ENCODE measurements at regions of chr7 and their contacts with region 1.

Region 1: DNA sequence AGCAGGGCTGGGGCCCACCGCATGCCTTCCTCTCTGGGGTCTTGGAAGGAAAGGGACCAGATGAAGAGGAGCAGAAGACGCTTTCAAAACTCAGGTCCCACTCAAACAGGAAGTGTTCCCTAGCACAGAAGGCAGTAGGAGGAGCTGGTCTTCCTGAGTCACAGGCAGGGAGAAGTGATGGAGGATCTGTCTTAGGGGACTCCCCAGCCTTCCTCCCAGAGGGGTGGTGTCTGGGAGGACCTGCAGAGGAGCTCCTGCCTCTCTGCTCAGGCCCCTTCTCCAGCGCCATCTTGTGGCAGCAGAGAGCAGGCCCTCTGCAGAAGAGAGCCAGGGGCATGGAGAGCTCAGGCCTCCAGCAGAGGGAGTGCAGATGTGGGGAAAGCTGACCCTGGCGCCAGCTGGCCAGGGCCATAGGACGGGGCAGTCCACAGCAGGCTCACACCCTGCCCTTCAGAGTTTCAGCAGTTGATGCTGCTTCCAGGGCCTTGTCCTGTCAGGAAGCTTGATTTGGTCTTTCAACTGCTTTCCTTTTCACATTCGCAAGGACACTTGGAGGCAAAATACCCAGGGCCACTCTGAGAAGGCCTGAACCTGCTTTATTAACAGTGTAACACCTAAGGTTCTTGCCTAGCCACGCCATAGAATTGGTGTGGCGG is 62.2 kb upstream of the TARP start:
- DNase-seq: peak; percentile 90
- H3K4me3 Mint-ChIP-seq: peak overlapping the region; percentile 43
- H3K27ac Mint-ChIP-seq: peak overlapping the region; percentile 77
- H3K4me1 Mint-ChIP-seq: peaks cover 39% of the 10 kb centered on the region
- H3K27me3 Mint-ChIP-seq: no peaks in the 10 kb centered on the region

Region 2: DNA sequence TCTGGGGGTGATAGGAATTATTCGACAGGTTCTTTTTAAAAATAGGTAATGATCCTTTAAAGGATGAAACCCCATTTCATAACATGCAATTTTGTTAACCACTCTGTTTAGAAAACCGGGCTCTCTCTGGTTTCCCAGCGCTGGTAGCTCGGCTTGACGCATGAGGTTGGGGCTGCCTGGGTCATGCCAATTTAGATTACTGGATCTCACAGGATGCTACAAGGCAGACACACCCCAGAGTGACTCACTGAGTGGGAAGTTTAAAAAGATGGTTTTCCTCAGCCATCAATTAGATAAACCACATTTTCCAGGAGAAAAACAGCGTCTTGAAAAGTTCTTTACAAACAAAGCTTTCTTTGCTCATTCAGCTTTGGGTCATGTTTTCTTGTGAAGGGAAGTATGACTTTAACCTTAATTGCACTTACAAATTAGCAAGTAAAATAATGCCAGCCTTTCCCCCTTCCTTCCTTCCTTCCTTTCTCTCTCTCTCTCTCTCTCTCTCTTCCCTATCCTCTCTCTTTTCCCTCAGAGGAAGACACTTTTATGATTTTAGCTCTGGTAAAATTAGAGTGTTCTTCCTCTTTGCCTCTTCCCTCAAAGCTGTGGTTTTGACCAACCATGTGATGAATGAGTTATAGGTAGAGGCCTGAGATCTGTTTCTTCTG is 315.4 kb before region 1 on chr7:
- CTCF ChIA-PET with region 1: no interaction called
- intact Hi-C with region 1: no loop called
- DNase-seq: no peak
- H3K4me3 Mint-ChIP-seq: no peak overlapping the region
- H3K27ac Mint-ChIP-seq: no peak overlapping the region
- H3K4me1 Mint-ChIP-seq: no peaks in the 10 kb centered on the region
- H3K27me3 Mint-ChIP-seq: peaks cover 16% of the 10 kb centered on the region

Region 3: DNA sequence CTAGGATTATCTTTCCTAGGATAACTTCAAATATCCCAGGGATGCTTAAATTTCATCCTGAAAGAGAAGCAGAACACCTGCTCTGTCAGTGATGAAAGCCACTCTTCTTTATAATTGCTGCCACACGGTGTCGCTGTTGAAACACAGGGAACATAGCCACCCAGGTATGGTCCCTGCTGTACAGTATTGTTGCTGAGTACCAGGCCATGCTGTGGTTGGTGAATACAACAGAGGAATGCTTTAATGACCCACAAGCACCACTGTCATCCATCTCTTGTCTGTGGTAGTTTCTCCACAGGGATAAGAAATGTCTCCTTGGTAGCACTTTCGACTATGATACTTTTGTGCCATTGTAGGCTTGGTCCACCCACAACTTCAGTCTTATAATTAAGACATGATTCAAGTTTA is 228.1 kb before region 1 on chr7:
- CTCF ChIA-PET with region 1: interaction called, 20 read pairs
- intact Hi-C with region 1: loop called (anchors 1 kb)
- DNase-seq: peak; percentile 84
- H3K4me3 Mint-ChIP-seq: no peak overlapping the region
- H3K27ac Mint-ChIP-seq: no peak overlapping the region
- H3K4me1 Mint-ChIP-seq: no peaks in the 10 kb centered on the region
- H3K27me3 Mint-ChIP-seq: peaks cover 8% of the 10 kb centered on the region

Region 4: GRCh38 chr7:38222481-38223096 is 113.0 kb before region 1 on chr7:
- CTCF ChIA-PET with region 1: interaction called, 80 read pairs
- intact Hi-C with region 1: no loop called
- DNase-seq: peak; percentile 21
- H3K4me3 Mint-ChIP-seq: no peak overlapping the region
- H3K27ac Mint-ChIP-seq: no peak overlapping the region
- H3K4me1 Mint-ChIP-seq: peaks cover 2% of the 10 kb centered on the region
- H3K27me3 Mint-ChIP-seq: no peaks in the 10 kb centered on the region

Region 5: DNA sequence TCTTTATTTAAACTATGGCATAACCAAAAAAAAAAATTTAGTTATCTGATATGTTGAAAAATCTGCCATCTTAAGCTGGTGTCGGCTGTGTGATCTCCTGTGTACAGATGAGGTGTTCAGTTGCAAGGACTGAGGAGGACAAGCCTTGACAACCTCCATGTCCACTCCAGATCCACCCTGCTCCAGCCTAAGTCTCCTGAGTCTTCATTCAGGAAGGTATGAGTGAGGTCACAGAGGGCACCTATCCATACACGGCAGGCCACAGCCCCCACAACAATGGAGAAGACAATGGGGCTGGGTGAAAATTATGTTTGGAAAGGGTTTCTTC is 78.3 kb before region 1 on chr7:
- CTCF ChIA-PET with region 1: no interaction called
- intact Hi-C with region 1: loop called (anchors 2 kb)
- DNase-seq: no peak
- H3K4me3 Mint-ChIP-seq: no peak overlapping the region
- H3K27ac Mint-ChIP-seq: no peak overlapping the region
- H3K4me1 Mint-ChIP-seq: no peaks in the 10 kb centered on the region
- H3K27me3 Mint-ChIP-seq: no peaks in the 10 kb centered on the region

Region 6: GRCh38 chr7:38318803-38319416 is 16.7 kb before region 1 on chr7:
- CTCF ChIA-PET with region 1: interaction called, 34 read pairs
- intact Hi-C with region 1: loop called (anchors 1 kb)
- DNase-seq: peak; percentile 33
- H3K4me3 Mint-ChIP-seq: peak overlapping the region; percentile 27
- H3K27ac Mint-ChIP-seq: no peak overlapping the region
- H3K4me1 Mint-ChIP-seq: peaks cover 26% of the 10 kb centered on the region
- H3K27me3 Mint-ChIP-seq: no peaks in the 10 kb centered on the region

Region 7: GRCh38 chr7:38686888-38687287 is 351.3 kb after region 1 on chr7:
- CTCF ChIA-PET with region 1: no interaction called
- intact Hi-C with region 1: no loop called
- DNase-seq: no peak
- H3K4me3 Mint-ChIP-seq: no peak overlapping the region
- H3K27ac Mint-ChIP-seq: no peak overlapping the region
- H3K4me1 Mint-ChIP-seq: no peaks in the 10 kb centered on the region
- H3K27me3 Mint-ChIP-seq: peaks cover 7% of the 10 kb centered on the region